Activated CD4-positive, alpha-beta T cell treated with anti-CD3 and anti-CD28 coated beads for 36 hours (primary cell): ENCODE measurements at regions of chr1 and their contacts with region 1.

Region 1: GRCh38 chr1:40257688-40258444 is at the start of gene ZMPSTE24:
- DNase-seq: peak; percentile 98
- ATAC-seq: peak; percentile 97
- H3K4me3 Mint-ChIP-seq: peak within 1 kb of the TSS; percentile 99
- H3K27ac Mint-ChIP-seq: peak within 1 kb of the TSS; percentile 100
- H3K4me1 Mint-ChIP-seq: peaks cover 47% of the 10 kb centered on the region
- H3K27me3 Mint-ChIP-seq: no peaks in the 10 kb centered on the region
- total RNA-seq, gene ZMPSTE24: 20.7 to 23.0 TPM

Region 2: GRCh38 chr1:39189592-39190041 is 1068.2 kb before region 1 on chr1:
- CTCF ChIA-PET with region 1: no interaction called
- POLR2A ChIA-PET with region 1: no interaction called
- intact Hi-C with region 1: loop called in 1 of 2 experiments (anchors 5 kb)
- DNase-seq: no peak
- ATAC-seq: no peak
- H3K4me3 Mint-ChIP-seq: no peak overlapping the region
- H3K27ac Mint-ChIP-seq: peak overlapping the region; percentile 91
- H3K4me1 Mint-ChIP-seq: peaks cover 90% of the 10 kb centered on the region
- H3K27me3 Mint-ChIP-seq: no peaks in the 10 kb centered on the region

Region 3: DNA sequence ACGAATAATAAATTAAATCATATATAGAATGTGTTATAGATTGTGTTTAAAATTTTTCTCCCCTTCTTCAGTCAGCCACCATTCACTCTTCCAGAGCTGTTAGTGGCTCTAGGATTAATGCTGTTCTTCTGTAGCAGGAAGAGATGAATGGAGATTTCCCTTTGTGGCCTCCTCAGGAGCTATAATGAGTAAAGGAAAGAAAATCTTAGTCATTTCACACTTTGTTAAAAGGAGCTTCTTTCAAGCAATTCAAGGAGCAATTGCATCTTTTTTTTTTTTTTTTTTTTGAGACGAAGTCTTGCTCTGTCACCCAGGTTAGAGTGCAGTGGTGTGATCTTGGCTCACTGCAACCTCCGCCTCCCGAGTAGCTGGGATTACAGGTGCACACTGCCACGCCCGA is 33.8 kb before region 1 on chr1:
- CTCF ChIA-PET with region 1: no interaction called
- POLR2A ChIA-PET with region 1: interaction called, 6 read pairs
- intact Hi-C with region 1: loop called (anchors 2 to 5 kb)
- DNase-seq: peak; percentile 45
- ATAC-seq: peak; percentile 88
- H3K4me3 Mint-ChIP-seq: no peak overlapping the region
- H3K27ac Mint-ChIP-seq: no peak overlapping the region
- H3K4me1 Mint-ChIP-seq: peaks cover 23% of the 10 kb centered on the region
- H3K27me3 Mint-ChIP-seq: no peaks in the 10 kb centered on the region

Region 4: GRCh38 chr1:40241362-40241761 is 16.5 kb before region 1 on chr1:
- CTCF ChIA-PET with region 1: interaction called, 5 read pairs
- POLR2A ChIA-PET with region 1: interaction called, 4 read pairs
- intact Hi-C with region 1: loop called (anchors 1 to 2 kb)
- DNase-seq: no peak
- ATAC-seq: peak; percentile 62
- H3K4me3 Mint-ChIP-seq: peak overlapping the region; percentile 6
- H3K27ac Mint-ChIP-seq: peak overlapping the region; percentile 81
- H3K4me1 Mint-ChIP-seq: peaks cover 52% of the 10 kb centered on the region
- H3K27me3 Mint-ChIP-seq: peaks cover 3% of the 10 kb centered on the region

Region 5: GRCh38 chr1:40373338-40374283 is 115.7 kb after region 1 on chr1 and contains the start of gene SMAP2:
- CTCF ChIA-PET with region 1: no interaction called
- POLR2A ChIA-PET with region 1: no interaction called
- intact Hi-C with region 1: loop called in 1 of 2 experiments (anchors 5 kb)
- DNase-seq: peak; percentile 98
- ATAC-seq: peak; percentile 85
- H3K4me3 Mint-ChIP-seq: peak within 1 kb of the TSS; percentile 100
- H3K27ac Mint-ChIP-seq: peak within 1 kb of the TSS; percentile 99
- H3K4me1 Mint-ChIP-seq: peaks cover 44% of the 10 kb centered on the region
- H3K27me3 Mint-ChIP-seq: no peaks in the 10 kb centered on the region
- total RNA-seq, gene SMAP2: 241 to 258 TPM

Region 6: GRCh38 chr1:40449684-40450494 is 192.0 kb after region 1 on chr1 and contains the start of gene ZFP69B:
- CTCF ChIA-PET with region 1: no interaction called
- POLR2A ChIA-PET with region 1: no interaction called
- intact Hi-C with region 1: loop called in 1 of 2 experiments (anchors 1 kb)
- DNase-seq: peak; percentile 96
- ATAC-seq: peak; percentile 67
- H3K4me3 Mint-ChIP-seq: peak within 1 kb of the TSS; percentile 71
- H3K27ac Mint-ChIP-seq: peak within 1 kb of the TSS; percentile 97
- H3K4me1 Mint-ChIP-seq: peaks cover 30% of the 10 kb centered on the region
- H3K27me3 Mint-ChIP-seq: no peaks in the 10 kb centered on the region
- total RNA-seq, gene ZFP69B: 4.6 to 5.3 TPM